ENCODE measurements at regions of chr13 and their contacts with region 1.

Region 1: GRCh38 chr13:70623239-70623638 is 515.0 kb upstream of the KLHL1 start:
- DNase-seq: no peak
- ATAC-seq: no peak
- H3K4me3 ChIP-seq: no peak overlapping the region
- H3K4me3 Mint-ChIP-seq: no peak overlapping the region
- H3K27ac ChIP-seq: no peak overlapping the region
- H3K27ac Mint-ChIP-seq: no peak overlapping the region
- H3K4me1 ChIP-seq: no peaks in the 10 kb centered on the region
- H3K4me1 Mint-ChIP-seq: no peaks in the 10 kb centered on the region
- H3K27me3 ChIP-seq: no peaks in the 10 kb centered on the region
- H3K27me3 Mint-ChIP-seq: no peaks in the 10 kb centered on the region

Region 2: DNA sequence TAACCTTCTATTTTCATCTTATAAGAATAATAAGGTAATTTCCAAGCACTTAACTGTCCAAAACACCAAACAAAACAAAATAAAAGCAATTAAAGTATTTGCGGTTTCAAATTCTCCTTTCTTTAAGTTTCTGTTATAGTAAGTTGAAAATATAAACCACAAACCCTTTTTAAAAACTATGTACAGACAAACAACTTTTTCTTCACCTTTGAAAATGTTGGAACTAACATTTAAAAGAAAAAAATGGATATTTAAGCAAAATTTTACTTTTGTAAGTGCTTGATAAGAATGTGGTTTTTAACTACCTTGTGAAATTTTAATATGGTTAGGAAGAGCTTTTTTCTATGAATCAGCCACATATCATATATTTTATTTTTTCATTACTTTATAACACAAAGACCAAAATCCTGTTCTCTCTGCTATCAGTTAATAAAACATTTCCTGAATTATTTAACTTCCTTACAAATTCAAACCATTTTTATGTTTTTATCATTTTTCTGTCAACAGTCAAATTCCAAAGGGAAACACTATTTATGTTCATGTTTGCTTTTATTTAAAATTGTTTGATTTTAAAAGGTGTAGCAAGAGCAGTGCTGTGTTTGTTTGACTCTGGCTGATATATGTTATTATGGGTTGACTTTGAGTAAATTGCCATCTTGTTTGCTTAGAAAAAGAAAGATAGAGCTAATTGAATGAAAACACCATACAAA is 39.1 kb after region 1 on chr13:
- CTCF ChIA-PET with region 1: no interaction called
- POLR2A ChIA-PET with region 1: no interaction called
- intact Hi-C with region 1: no loop called
- DNase-seq: no peak
- ATAC-seq: no peak
- H3K4me3 ChIP-seq: no peak overlapping the region
- H3K4me3 Mint-ChIP-seq: no peak overlapping the region
- H3K27ac ChIP-seq: no peak overlapping the region
- H3K27ac Mint-ChIP-seq: no peak overlapping the region
- H3K4me1 ChIP-seq: no peaks in the 10 kb centered on the region
- H3K4me1 Mint-ChIP-seq: no peaks in the 10 kb centered on the region
- H3K27me3 ChIP-seq: no peaks in the 10 kb centered on the region
- H3K27me3 Mint-ChIP-seq: no peaks in the 10 kb centered on the region

Region 3: GRCh38 chr13:71477735-71478134 is 854.5 kb after region 1 on chr13:
- CTCF ChIA-PET with region 1: no interaction called
- POLR2A ChIA-PET with region 1: no interaction called
- intact Hi-C with region 1: loop called in 1 of 2 experiments (anchors 10 kb)
- DNase-seq: no peak
- ATAC-seq: no peak
- H3K4me3 ChIP-seq: no peak overlapping the region
- H3K4me3 Mint-ChIP-seq: no peak overlapping the region
- H3K27ac ChIP-seq: no peak overlapping the region
- H3K27ac Mint-ChIP-seq: no peak overlapping the region
- H3K4me1 ChIP-seq: no peaks in the 10 kb centered on the region
- H3K4me1 Mint-ChIP-seq: no peaks in the 10 kb centered on the region
- H3K27me3 ChIP-seq: no peaks in the 10 kb centered on the region
- H3K27me3 Mint-ChIP-seq: no peaks in the 10 kb centered on the region

Measured in naive thymus-derived CD4-positive, alpha-beta T cell (primary cell).